GM23248 (cell line): ENCODE measurements at regions of chr10 and their contacts with region 1.

Region 1: DNA sequence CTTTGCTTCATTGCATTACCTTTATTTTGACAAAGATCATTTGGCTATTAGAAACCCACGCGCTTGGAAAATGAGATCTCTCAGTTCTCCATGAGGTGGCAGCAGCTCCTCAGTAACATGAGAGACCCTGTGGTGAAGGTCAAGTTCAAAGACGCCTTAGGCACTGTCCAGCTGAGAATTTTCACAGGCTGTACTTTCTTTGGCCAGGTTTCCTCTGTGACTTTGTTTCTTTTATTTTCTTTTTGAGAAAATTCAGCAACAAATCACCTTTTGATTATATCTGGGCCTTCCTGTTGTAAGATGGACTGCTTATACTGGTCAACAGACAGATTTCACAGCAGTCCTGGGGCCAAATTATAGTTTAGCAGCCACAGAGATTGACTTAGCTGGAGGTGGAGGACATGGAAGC is 54.5 kb downstream of the RAB18 start:
- DNase-seq: peak; percentile 79
- H3K4me3 ChIP-seq: no peak overlapping the region
- H3K27ac ChIP-seq: no peak overlapping the region
- H3K4me1 ChIP-seq: no peaks in the 10 kb centered on the region
- H3K27me3 ChIP-seq: no peaks in the 10 kb centered on the region

Region 2: DNA sequence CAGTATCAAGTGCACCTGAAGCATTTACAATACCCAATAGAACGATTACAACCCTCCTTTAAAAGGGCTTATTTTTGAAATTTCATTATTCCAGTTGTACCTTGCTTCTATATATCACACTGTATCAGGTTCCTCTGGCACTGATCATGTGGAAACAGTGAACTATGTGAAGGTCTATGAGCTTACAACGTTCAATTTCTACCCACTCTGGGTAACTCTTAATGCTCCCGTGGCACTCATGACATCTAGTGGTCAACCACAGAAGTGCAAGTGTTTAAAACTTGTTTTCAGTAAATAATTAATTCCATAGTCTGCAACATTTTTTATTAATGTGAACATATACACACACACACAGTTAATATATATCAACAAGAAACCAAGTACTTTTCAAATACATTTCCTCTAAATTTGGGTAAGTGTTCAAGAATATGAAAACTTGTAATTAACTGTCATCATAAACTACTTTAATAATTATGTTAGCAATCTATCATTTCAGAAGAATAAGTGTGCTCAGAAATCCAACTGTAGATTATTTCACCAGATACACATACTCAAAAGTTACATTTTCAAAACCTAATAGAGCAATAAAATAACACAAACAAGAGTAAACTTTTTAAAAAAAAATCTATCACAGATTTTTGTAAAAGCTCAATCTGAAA is 683.3 kb after region 1 on chr10:
- in situ Hi-C with region 1: loop called (anchors 10 kb)
- DNase-seq: peak; percentile 64
- H3K4me3 ChIP-seq: no peak overlapping the region
- H3K27ac ChIP-seq: no peak overlapping the region
- H3K4me1 ChIP-seq: no peaks in the 10 kb centered on the region
- H3K27me3 ChIP-seq: no peaks in the 10 kb centered on the region